ENCODE measurements at regions of chr6 and their contacts with region 1.

Region 1: GRCh38 chr6:104771258-104771832 is 88.4 kb downstream of the HACE1 start:
- DNase-seq: peak; percentile 13
- ATAC-seq: peak; percentile 86
- H3K4me3 ChIP-seq: no peak overlapping the region
- H3K27ac ChIP-seq: no peak overlapping the region
- H3K4me1 ChIP-seq: no peaks in the 10 kb centered on the region
- H3K27me3 ChIP-seq: no peaks in the 10 kb centered on the region
- CTCF ChIP-seq: peak; percentile 59; the same call in 1 of the 2 replicates

Region 2: GRCh38 chr6:104525677-104526312 is 245.6 kb before region 1 on chr6:
- CTCF ChIA-PET with region 1: interaction called, 3 read pairs
- POLR2A ChIA-PET with region 1: no interaction called
- in situ Hi-C with region 1: no loop called
- intact Hi-C with region 1: loop called (anchors 2 kb)
- DNase-seq: peak; percentile 46
- ATAC-seq: peak; percentile 94
- H3K4me3 ChIP-seq: peak overlapping the region; percentile 21 to 22
- H3K27ac ChIP-seq: peak overlapping the region; percentile 54; the same call in 1 of the 2 replicates
- H3K4me1 ChIP-seq: peaks cover 12% of the 10 kb centered on the region
- H3K27me3 ChIP-seq: no peaks in the 10 kb centered on the region
- CTCF ChIP-seq: peak; percentile 96

Region 3: GRCh38 chr6:104623052-104623690 is 148.2 kb before region 1 on chr6:
- CTCF ChIA-PET with region 1: no interaction called
- POLR2A ChIA-PET with region 1: no interaction called
- in situ Hi-C with region 1: no loop called
- intact Hi-C with region 1: loop called (anchors 10 kb)
- DNase-seq: no peak
- ATAC-seq: peak; percentile 98
- H3K4me3 ChIP-seq: peak overlapping the region; percentile 7 to 47; a peak in 3 of 4 replicates
- H3K27ac ChIP-seq: peak overlapping the region; percentile 92
- H3K4me1 ChIP-seq: peaks cover 31% of the 10 kb centered on the region
- H3K27me3 ChIP-seq: no peaks in the 10 kb centered on the region
- CTCF ChIP-seq: peak; percentile 31

Region 4: GRCh38 chr6:104682722-104683643 is 88.4 kb before region 1 on chr6:
- CTCF ChIA-PET with region 1: no interaction called
- POLR2A ChIA-PET with region 1: no interaction called
- in situ Hi-C with region 1: no loop called
- intact Hi-C with region 1: loop called (anchors 1 kb)
- DNase-seq: no peak
- ATAC-seq: no peak
- H3K4me3 ChIP-seq: no peak overlapping the region
- H3K27ac ChIP-seq: 0 out of 2 replicates have a peak overlapping the region, but pooled peaks have one; percentile 27
- H3K4me1 ChIP-seq: no peaks in the 10 kb centered on the region; the same call in 1 of the 2 replicates
- H3K27me3 ChIP-seq: no peaks in the 10 kb centered on the region
- CTCF ChIP-seq: peak; percentile 94